ENCODE measurements at regions of chr3 and their contacts with region 1.

Region 1: DNA sequence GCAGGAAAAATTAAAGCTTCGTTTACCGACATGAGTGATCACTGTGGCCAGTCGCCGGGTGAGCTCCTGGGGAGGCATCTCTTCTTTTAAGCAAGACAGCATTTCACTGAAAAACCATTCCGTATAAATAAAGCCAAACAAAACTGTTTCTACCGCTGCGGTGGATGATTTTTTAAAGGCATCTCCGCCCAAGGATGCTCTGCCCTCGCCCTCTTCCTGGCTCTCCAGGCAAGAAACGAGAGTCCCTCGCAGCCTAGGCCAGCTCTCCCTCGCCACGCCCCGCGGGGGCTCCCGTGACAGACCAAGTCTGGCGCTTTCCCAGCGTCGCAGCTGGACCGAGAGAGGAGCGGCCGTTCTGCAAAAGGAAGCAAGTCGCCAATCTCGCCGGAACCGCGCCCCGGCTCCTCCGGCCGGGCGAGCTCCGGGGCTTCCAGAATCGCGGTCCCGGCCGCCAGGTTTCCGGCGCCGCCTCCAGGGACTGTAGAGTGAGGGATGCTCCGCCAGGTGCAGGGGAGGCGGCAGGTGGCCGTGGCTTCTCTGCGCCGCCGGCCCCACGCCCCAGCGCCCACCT is 458 bp downstream of the MCF2L2 start:
- DNase-seq: peak; percentile 63
- ATAC-seq: peak; percentile 77
- H3K4me3 ChIP-seq: peak overlapping the region; percentile 81
- H3K27ac ChIP-seq: no peak overlapping the region
- H3K4me1 ChIP-seq: 0 out of 2 replicates have a peak, but pooled peaks cover 15% of the 10 kb centered on the region
- H3K27me3 ChIP-seq: no peaks in the 10 kb centered on the region
- CTCF ChIP-seq: no peak

Region 2: GRCh38 chr3:183224180-183224970 is 203.6 kb before region 1 on chr3:
- CTCF ChIA-PET with region 1: no interaction called
- POLR2A ChIA-PET with region 1: no interaction called
- intact Hi-C with region 1: no loop called
- DNase-seq: no peak
- ATAC-seq: no peak
- H3K4me3 ChIP-seq: no peak overlapping the region
- H3K27ac ChIP-seq: no peak overlapping the region
- H3K4me1 ChIP-seq: no peaks in the 10 kb centered on the region
- H3K27me3 ChIP-seq: no peaks in the 10 kb centered on the region
- CTCF ChIP-seq: no peak

Region 3: DNA sequence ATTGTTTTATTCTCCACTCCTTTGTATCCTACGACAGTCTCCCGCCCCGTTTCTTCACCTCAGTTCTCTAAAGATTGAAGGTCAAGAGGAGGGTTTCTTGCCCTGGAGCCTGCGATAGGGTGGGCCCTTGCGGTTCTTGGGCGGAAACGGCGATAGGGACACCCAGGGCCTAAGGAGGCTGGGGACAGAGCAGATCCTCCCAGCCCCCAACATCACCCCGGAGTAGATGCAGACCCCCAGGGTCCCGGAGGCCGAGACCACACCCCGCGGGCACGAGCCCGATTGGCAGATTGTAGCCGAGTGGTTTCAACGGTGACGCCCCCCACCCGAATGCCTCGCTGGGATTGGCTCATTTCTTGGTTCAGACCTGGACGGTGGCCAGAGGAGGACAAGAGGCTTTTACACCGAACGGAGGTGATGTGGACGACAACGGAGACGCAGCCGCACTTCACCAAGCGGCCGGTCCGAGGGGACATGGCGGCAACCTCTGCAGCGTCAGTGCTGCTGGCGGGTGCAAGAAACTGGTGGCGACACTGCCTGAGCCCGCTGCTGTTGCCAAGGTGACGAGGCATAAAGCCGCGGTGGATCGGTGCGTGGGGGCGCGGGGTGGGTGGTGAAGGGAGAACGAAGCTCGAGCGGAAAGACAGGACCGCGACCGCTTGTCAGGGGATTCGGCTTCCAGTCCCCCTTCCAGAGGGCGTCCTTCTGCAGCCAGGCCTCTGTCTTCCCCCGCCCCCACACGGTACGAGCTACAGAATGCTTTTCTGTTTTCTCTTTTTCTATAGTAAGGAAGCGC is 19.4 kb after region 1 on chr3:
- CTCF ChIA-PET with region 1: no interaction called
- POLR2A ChIA-PET with region 1: no interaction called
- intact Hi-C with region 1: loop called (anchors 2 kb)
- DNase-seq: peak; percentile 90
- ATAC-seq: peak; percentile 88
- H3K4me3 ChIP-seq: peak overlapping the region; percentile 99
- H3K27ac ChIP-seq: no peak overlapping the region
- H3K4me1 ChIP-seq: peaks cover 15% of the 10 kb centered on the region
- H3K27me3 ChIP-seq: no peaks in the 10 kb centered on the region
- CTCF ChIP-seq: peak; percentile 28; the same call in 1 of the 2 replicates

Measured in PC-3 (cell line).